ENCODE measurements at regions of chr2 and their contacts with region 1.

Region 1: DNA sequence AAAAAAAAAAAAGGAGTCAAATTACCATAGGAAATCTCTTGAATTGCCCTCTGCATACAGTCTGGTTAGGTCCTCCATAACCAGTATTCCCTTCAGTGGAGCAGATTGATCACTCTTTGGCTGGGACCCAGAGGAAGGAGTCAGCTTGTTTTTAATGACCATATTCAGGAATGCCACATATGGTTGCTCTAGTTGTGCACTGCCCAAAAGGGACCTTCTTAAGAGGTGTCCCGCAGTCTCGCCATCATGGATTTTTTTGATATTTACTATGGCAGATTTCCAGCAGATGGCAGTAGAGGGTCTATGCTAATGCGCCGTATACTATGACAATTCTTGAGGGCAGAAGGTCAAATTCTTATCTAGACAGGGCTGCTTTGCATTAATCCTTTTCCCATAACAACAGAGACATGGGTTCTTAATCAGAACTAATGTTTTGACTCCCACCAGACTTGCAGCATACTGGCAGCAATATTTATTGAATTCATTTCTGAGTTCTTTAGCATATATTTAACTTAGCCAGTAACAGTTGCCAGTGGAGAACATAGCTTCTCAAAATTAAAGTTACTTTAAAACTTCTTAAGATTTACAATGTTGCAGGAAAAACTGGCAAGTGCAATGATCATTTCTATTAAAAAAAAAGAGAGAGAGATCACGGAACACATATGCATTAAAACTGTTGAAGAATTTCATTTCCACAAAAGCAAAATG is 31.8 kb upstream of the INPP4A start:
- DNase-seq: peak; percentile 77
- H3K4me3 ChIP-seq: no peak overlapping the region
- H3K27ac ChIP-seq: no peak overlapping the region
- H3K4me1 ChIP-seq: no peaks in the 10 kb centered on the region
- H3K27me3 ChIP-seq: peaks cover 3% of the 10 kb centered on the region
- CTCF ChIP-seq: peak; percentile 76

Region 2: GRCh38 chr2:98601532-98602132 is 188.7 kb after region 1 on chr2:
- CTCF ChIA-PET with region 1: no interaction called
- POLR2A ChIA-PET with region 1: no interaction called
- intact Hi-C with region 1: loop called (anchors 1 kb)
- DNase-seq: peak; percentile 12
- H3K4me3 ChIP-seq: no peak overlapping the region
- H3K27ac ChIP-seq: no peak overlapping the region
- H3K4me1 ChIP-seq: peaks cover under 1% of the 10 kb centered on the region
- H3K27me3 ChIP-seq: no peaks in the 10 kb centered on the region
- CTCF ChIP-seq: peak; percentile 64

Measured in A673 (cell line).